ENCODE measurements at regions of chr2 and their contacts with region 1.

Region 1: GRCh38 chr2:48790407-48791170 is 35.1 kb upstream of the LHCGR start:
- DNase-seq: no peak
- ATAC-seq: no peak
- H3K4me3 Mint-ChIP-seq: no peak overlapping the region
- H3K27ac Mint-ChIP-seq: no peak overlapping the region
- H3K4me1 Mint-ChIP-seq: no peaks in the 10 kb centered on the region
- H3K27me3 Mint-ChIP-seq: peaks cover 4% of the 10 kb centered on the region

Region 2: GRCh38 chr2:48600204-48600813 is 190.3 kb before region 1 on chr2:
- CTCF ChIA-PET with region 1: no interaction called
- POLR2A ChIA-PET with region 1: no interaction called
- intact Hi-C with region 1: loop called in 1 of 2 experiments (anchors 10 kb)
- DNase-seq: peak; percentile 10
- ATAC-seq: no peak
- H3K4me3 Mint-ChIP-seq: no peak overlapping the region
- H3K27ac Mint-ChIP-seq: no peak overlapping the region
- H3K4me1 Mint-ChIP-seq: no peaks in the 10 kb centered on the region
- H3K27me3 Mint-ChIP-seq: no peaks in the 10 kb centered on the region

Region 3: DNA sequence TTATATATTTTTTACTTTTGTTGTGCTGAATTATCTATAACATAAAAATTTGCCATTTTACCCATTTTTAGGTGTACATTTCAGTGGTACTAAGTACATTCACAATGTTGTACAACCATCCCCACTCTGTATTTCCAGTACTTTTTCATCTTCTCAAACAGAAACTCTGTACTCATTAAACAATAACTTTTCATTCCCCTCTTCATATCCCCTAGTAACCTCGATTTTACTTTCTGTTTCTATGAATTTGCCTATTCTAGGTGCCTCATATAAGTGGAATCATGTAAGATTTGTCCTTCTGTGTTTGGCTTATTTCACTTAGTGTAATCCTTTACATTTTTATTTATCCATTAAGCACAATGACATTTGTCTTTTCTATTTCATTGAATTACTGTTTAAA is 121.6 kb before region 1 on chr2:
- CTCF ChIA-PET with region 1: no interaction called
- POLR2A ChIA-PET with region 1: no interaction called
- intact Hi-C with region 1: no loop called
- DNase-seq: no peak
- ATAC-seq: no peak
- H3K4me3 Mint-ChIP-seq: no peak overlapping the region
- H3K27ac Mint-ChIP-seq: no peak overlapping the region
- H3K4me1 Mint-ChIP-seq: no peaks in the 10 kb centered on the region
- H3K27me3 Mint-ChIP-seq: peaks cover 7% of the 10 kb centered on the region

Region 4: DNA sequence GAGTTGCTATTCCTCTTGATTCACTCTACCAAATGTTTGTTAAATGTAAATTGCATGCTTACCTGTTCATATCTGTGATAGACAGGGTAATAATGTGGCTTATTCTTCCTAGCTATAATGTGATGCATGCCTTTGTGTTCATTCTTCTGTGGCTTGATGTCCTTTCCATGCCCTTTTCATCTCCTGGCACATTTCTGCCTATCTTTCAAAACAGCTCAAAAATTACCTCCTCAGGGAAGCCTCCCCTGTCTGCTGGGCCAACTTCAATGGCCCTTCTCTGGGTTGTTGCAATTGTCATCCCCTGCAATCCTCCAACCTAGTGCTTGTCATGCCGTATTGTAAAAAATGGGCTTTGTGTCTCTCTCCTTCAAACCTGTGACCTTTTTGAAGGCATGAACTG is 17.7 kb after region 1 on chr2:
- CTCF ChIA-PET with region 1: no interaction called
- POLR2A ChIA-PET with region 1: no interaction called
- intact Hi-C with region 1: no loop called
- DNase-seq: no peak
- ATAC-seq: no peak
- H3K4me3 Mint-ChIP-seq: no peak overlapping the region
- H3K27ac Mint-ChIP-seq: no peak overlapping the region
- H3K4me1 Mint-ChIP-seq: no peaks in the 10 kb centered on the region
- H3K27me3 Mint-ChIP-seq: peaks cover 5% of the 10 kb centered on the region